H1 (cell line): ENCODE measurements at regions of chr5 and their contacts with region 1.

Region 1: GRCh38 chr5:66306105-66306843 is 162.2 kb downstream of the SREK1 start:
- DNase-seq: peak; percentile 34 to 57
- H3K4me3 ChIP-seq: no peak overlapping the region
- H3K27ac ChIP-seq: no peak overlapping the region
- H3K4me1 ChIP-seq: no peaks in the 10 kb centered on the region
- H3K27me3 ChIP-seq: no peaks in the 10 kb centered on the region
- CTCF ChIP-seq: peak; percentile 56 to 86 (median 85)
- EP300 ChIP-seq: no peak
- POLR2A ChIP-seq: no peak
- RAD21 ChIP-seq: peak; percentile 76 to 87

Region 2: GRCh38 chr5:65938256-65938655 is 368.0 kb before region 1 on chr5:
- CTCF ChIA-PET with region 1: no interaction called
- POLR2A ChIA-PET with region 1: no interaction called
- DNase-seq: no peak
- H3K4me3 ChIP-seq: no peak overlapping the region
- H3K27ac ChIP-seq: no peak overlapping the region
- H3K4me1 ChIP-seq: no peaks in the 10 kb centered on the region; a peak in 1 of 7 replicates
- H3K27me3 ChIP-seq: no peaks in the 10 kb centered on the region
- CTCF ChIP-seq: no peak
- EP300 ChIP-seq: no peak
- POLR2A ChIP-seq: no peak
- RAD21 ChIP-seq: no peak

Region 3: DNA sequence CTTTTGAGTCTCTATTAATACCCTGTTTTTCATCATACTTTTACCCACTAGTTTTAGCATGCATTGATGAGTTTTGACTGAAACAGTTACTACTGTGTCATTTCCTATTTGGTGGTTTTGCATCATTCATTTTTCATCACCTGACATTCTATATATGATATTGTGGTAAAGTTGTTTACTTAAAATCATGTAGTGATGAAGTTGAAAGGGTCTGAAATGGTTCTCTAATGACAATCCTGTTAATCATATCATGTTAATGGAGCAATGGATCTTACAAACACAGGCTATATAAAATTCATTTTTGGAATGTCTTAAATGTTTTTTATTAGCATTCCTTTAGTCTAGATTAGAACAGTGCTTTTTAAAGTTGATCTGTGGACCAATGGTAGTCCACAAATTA is 295.8 kb before region 1 on chr5:
- CTCF ChIA-PET with region 1: no interaction called
- POLR2A ChIA-PET with region 1: no interaction called
- DNase-seq: no peak
- H3K4me3 ChIP-seq: no peak overlapping the region
- H3K27ac ChIP-seq: no peak overlapping the region
- H3K4me1 ChIP-seq: no peaks in the 10 kb centered on the region
- H3K27me3 ChIP-seq: no peaks in the 10 kb centered on the region
- CTCF ChIP-seq: no peak
- EP300 ChIP-seq: no peak
- POLR2A ChIP-seq: no peak
- RAD21 ChIP-seq: no peak

Region 4: DNA sequence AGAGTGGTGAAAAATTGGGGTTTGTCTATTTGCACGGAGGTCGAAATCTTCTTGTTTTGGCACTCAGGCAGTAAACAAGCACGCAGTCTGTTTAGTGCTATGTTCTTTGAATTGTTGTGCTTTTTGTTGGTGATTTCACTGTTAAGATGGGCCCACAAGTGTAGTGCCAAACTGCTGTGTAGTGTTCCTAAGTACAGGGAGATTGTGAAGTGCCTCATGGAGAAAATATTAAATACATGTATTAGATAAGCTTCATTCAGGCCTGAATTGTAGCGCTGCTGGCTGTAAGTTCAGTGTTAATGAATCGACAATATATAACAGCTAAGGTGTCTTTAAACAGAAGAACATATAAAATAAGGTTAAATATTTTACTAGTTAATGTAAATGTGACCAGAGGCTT is 144.9 kb before region 1 on chr5:
- CTCF ChIA-PET with region 1: no interaction called
- POLR2A ChIA-PET with region 1: no interaction called
- DNase-seq: no peak
- H3K4me3 ChIP-seq: no peak overlapping the region
- H3K27ac ChIP-seq: no peak overlapping the region
- H3K4me1 ChIP-seq: no peaks in the 10 kb centered on the region
- H3K27me3 ChIP-seq: no peaks in the 10 kb centered on the region
- CTCF ChIP-seq: no peak
- EP300 ChIP-seq: no peak
- POLR2A ChIP-seq: no peak
- RAD21 ChIP-seq: no peak

Region 5: GRCh38 chr5:66239034-66239433 is 67.2 kb before region 1 on chr5:
- CTCF ChIA-PET with region 1: interaction called, 10 read pairs
- POLR2A ChIA-PET with region 1: no interaction called
- DNase-seq: no peak
- H3K4me3 ChIP-seq: no peak overlapping the region
- H3K27ac ChIP-seq: no peak overlapping the region
- H3K4me1 ChIP-seq: no peaks in the 10 kb centered on the region
- H3K27me3 ChIP-seq: no peaks in the 10 kb centered on the region
- CTCF ChIP-seq: peak in 2 of 3 experiments; percentile 46 to 53; a peak in 2 of 4 replicates
- EP300 ChIP-seq: no peak
- POLR2A ChIP-seq: no peak
- RAD21 ChIP-seq: peak; percentile 73 to 76

Region 6: GRCh38 chr5:66337626-66338226 is 31.5 kb after region 1 on chr5:
- CTCF ChIA-PET with region 1: interaction called, 36 read pairs
- POLR2A ChIA-PET with region 1: no interaction called
- DNase-seq: no peak
- H3K4me3 ChIP-seq: no peak overlapping the region
- H3K27ac ChIP-seq: no peak overlapping the region
- H3K4me1 ChIP-seq: peaks cover 0 to 3% (median 1%) of the 10 kb centered on the region in 4 experiments; a peak in 3 of 7 replicates
- H3K27me3 ChIP-seq: no peaks in the 10 kb centered on the region
- CTCF ChIP-seq: no peak
- EP300 ChIP-seq: no peak
- POLR2A ChIP-seq: no peak
- RAD21 ChIP-seq: no peak

Region 7: GRCh38 chr5:66440202-66440680 is 134.0 kb after region 1 on chr5:
- CTCF ChIA-PET with region 1: interaction called, 18 read pairs
- POLR2A ChIA-PET with region 1: no interaction called
- DNase-seq: no peak
- H3K4me3 ChIP-seq: no peak overlapping the region
- H3K27ac ChIP-seq: no peak overlapping the region
- H3K4me1 ChIP-seq: no peaks in the 10 kb centered on the region
- H3K27me3 ChIP-seq: no peaks in the 10 kb centered on the region
- CTCF ChIP-seq: no peak
- EP300 ChIP-seq: no peak
- POLR2A ChIP-seq: no peak
- RAD21 ChIP-seq: no peak

Region 8: DNA sequence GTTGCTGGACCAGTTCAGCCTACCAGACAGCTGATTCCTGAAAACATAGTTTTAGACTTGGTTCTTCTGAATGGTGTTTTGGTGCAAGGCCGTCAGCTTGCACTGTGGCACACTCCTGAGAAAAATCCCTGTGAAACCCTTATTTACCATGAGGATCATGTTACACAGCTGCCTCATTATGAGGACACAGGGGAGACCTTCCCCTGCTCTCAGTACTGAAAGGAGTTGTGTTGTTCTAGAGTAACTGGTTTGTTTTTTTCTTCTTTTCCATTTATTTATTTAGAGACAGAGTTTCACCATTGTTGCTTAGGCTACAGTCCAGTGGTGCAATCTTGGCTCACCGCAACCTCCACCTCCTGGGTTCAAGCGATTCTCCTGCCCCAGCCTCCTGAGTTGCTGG is 327.5 kb after region 1 on chr5:
- CTCF ChIA-PET with region 1: no interaction called
- POLR2A ChIA-PET with region 1: no interaction called
- DNase-seq: no peak
- H3K4me3 ChIP-seq: no peak overlapping the region
- H3K27ac ChIP-seq: no peak overlapping the region
- H3K4me1 ChIP-seq: no peaks in the 10 kb centered on the region; a peak in 1 of 7 replicates
- H3K27me3 ChIP-seq: no peaks in the 10 kb centered on the region
- CTCF ChIP-seq: no peak
- EP300 ChIP-seq: no peak
- POLR2A ChIP-seq: no peak
- RAD21 ChIP-seq: no peak

Region 9: GRCh38 chr5:66658516-66658915 is 352.2 kb after region 1 on chr5:
- CTCF ChIA-PET with region 1: interaction called, 11 read pairs
- POLR2A ChIA-PET with region 1: no interaction called
- DNase-seq: no peak
- H3K4me3 ChIP-seq: no peak overlapping the region
- H3K27ac ChIP-seq: no peak overlapping the region
- H3K4me1 ChIP-seq: no peaks in the 10 kb centered on the region
- H3K27me3 ChIP-seq: no peaks in the 10 kb centered on the region
- CTCF ChIP-seq: no peak
- EP300 ChIP-seq: no peak
- POLR2A ChIP-seq: no peak
- RAD21 ChIP-seq: peak; percentile 19 to 21

Region 10: DNA sequence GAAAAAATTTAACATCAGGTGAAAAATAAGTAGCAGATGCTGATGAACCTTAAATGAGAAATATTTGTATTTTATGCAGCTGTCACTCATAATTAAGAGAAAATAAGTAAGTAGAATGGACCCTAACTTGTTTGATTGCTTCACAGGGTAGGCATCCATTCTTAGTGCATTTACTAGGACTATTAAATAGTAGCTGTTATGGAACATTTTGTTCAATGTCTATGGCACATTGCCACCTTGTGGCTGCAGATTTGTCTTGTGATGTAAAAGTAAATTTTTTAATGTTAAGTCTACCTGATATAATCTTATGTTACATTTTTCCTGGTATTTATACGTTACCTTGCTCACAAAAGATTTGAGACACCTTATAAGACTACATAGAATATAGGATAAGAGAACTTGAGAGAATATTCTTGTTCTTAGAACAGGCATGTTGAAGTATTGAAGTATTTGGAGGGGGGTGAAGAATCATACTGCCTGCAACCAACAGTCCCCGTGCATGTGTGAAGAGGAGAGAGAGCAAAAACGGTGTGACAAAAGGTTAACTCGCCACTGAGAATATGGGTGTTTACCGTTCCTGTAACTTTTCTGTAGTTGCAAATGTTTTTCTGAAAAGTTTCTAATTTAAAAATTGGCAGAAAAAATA is 451.0 kb after region 1 on chr5:
- CTCF ChIA-PET with region 1: interaction called, 140 read pairs
- POLR2A ChIA-PET with region 1: no interaction called
- DNase-seq: no peak
- H3K4me3 ChIP-seq: no peak overlapping the region
- H3K27ac ChIP-seq: no peak overlapping the region
- H3K4me1 ChIP-seq: no peaks in the 10 kb centered on the region
- H3K27me3 ChIP-seq: no peaks in the 10 kb centered on the region
- CTCF ChIP-seq: peak in 1 of 3 experiments; percentile 35; a peak in 2 of 4 replicates
- EP300 ChIP-seq: no peak
- POLR2A ChIP-seq: no peak
- RAD21 ChIP-seq: peak; percentile 59 to 71